ENCODE measurements at regions of chr19 and their contacts with region 1.

Region 1: DNA sequence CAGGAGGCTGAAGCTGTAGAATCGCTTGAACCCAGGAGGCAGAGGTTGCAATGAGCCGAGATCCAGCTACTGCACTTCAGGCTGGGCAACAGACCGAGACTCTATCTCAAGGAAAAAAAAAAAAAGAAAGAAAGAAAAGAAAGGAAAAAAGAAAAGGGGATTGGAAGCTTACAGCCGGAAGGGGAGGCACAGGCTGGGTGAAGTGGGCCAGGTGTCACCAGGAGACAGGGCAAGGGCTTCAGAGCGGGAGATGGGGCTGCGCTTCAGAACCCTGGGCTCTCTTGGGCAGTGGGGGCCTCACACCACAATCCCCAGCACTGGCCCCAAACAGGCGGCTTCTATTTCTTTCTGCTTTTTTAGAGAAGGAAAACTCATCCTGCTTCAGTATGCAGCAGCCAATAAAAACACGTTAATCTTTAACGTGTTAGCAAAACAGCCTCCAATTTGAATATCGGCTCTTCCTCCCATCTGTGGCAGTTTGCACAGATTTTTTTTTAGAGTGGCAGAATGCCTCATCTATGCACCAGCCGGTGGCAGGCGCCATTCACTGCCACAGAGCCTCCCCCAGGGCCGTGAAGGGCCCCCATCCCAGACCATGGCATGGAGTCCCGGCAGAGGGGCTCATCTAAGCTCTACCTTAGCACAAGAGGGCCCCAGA is 46.6 kb upstream of the C19orf12 start:
- DNase-seq: no peak
- H3K4me3 ChIP-seq: no peak overlapping the region
- H3K27me3 ChIP-seq: no peaks in the 10 kb centered on the region; the same call in 1 of the 2 replicates
- CTCF ChIP-seq: no peak

Region 2: DNA sequence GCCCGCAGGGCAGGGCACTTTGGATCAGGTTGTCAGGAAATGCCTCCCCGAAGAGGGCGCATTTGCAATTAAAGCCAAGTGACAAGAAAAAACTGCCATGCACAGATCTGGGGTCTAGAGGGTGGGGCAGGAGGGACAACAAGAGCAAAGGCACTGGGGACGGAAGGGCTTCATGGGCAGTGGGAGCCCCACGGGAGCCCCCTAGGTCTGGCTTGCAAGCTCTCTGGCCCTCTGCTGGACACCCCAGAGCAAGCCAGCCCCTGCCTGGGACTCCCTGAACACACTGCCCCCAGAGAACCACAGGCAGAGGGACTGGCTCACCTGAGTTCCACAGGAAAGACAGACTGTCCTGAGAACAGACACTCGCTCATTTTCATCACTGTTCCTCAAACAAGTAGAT is 16.5 kb before region 1 on chr19:
- CTCF ChIA-PET with region 1: interaction called, 12 read pairs
- POLR2A ChIA-PET with region 1: no interaction called
- DNase-seq: no peak
- H3K4me3 ChIP-seq: no peak overlapping the region
- H3K27me3 ChIP-seq: no peaks in the 10 kb centered on the region
- CTCF ChIP-seq: peak; percentile 13; the same call in 1 of the 2 replicates

Region 3: DNA sequence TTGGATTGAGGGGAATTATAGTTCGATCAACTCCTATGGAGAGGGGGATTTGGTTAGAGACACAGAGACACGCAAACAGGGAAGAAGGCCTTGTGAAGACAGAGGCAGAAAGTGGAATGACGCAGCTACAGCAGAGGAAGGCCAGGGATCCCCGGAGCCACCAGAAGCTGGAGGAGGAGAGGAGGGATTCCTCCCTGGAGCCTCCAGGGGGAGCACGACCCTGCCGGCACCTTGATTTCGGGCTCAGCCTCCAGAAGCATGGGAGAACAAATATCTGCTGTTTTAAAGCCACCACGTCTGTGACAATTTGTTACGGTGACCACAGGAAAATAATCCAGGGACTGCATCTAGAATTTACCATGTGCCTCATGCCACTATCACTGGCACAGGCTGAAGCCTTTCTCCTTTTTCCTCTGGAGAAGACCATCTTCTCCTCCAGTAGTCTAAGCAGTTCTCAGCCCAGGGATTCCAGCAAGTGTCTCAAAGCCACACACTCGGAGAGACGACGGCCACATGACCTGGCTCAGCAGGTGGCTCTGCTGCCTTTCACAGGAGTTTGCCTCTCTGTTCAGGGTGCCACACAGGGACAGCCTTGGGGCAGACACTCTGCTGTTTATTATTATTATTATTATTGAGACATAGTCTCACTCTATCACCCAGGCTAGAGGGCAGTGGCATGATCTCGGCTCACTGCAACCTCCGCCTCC is 10.2 kb after region 1 on chr19:
- CTCF ChIA-PET with region 1: interaction called, 34 read pairs
- POLR2A ChIA-PET with region 1: no interaction called
- DNase-seq: no peak
- H3K4me3 ChIP-seq: no peak overlapping the region
- H3K27me3 ChIP-seq: no peaks in the 10 kb centered on the region; the same call in 1 of the 2 replicates
- CTCF ChIP-seq: peak; percentile 91